ENCODE measurements at regions of chr2 and their contacts with region 1.

Region 1: DNA sequence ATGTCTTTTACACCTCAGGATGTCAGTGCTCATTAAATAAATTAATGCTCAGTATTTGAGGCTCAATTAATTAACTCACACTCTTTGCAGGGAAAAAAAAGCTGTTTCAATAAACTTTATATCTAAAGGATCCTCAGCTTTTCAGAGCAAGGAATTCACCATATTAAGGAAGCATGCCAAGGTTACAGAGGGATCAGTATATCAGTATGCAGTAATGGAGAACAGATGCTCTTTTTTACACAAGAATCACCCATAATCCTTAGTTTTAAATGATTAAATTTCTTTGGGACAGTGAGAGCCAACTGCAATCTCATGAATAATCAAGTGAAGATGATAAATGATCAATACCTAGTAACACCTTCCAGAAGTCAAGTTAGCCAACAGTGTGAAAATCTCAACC is 14.9 kb upstream of the LCT start:
- DNase-seq: no peak
- CTCF ChIP-seq: no peak

Region 2: DNA sequence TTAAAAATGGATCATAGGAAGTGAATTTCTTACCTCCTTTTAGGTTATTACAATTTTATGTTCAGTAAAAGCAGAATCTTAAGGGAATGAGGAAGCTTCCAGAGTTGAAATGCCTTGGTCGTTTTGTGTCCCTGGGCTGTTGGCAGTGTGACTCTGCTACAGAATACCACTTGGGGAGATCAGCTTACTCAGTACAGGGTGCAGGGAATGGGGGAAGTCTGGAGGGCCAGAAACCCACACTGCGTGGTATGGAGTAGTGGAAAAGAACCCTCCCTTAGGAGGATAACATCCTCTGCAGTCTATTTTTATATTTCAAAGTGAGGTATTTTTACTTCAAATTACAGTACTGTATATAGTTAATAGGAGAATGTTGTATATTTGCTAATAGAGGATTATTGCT is 269.5 kb before region 1 on chr2:
- CTCF ChIA-PET with region 1: no interaction called
- POLR2A ChIA-PET with region 1: no interaction called
- DNase-seq: no peak
- CTCF ChIP-seq: no peak

Region 3: GRCh38 chr2:135825550-135826176 is 26.2 kb before region 1 on chr2:
- CTCF ChIA-PET with region 1: interaction called, 14 read pairs
- POLR2A ChIA-PET with region 1: no interaction called
- DNase-seq: no peak
- CTCF ChIP-seq: no peak

Region 4: DNA sequence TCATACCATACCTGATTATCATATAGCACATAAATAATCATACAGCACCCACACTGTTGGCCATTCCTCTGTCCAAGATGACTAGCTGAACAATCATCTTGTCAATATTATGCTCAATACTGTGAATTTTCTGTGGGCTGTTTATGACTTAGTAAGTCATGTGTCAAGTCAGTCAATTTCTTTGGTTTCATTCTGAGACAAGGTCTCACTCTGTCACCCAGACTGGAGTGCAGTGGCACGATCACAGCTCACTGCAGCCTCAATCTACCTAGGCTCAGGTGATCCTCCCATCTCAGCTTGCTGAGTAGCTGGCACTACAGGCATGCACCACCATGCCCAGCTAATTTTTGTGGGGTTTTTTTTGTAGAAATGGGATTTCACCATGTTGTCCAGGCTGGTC is 18.7 kb after region 1 on chr2:
- CTCF ChIA-PET with region 1: interaction called, 11 read pairs
- POLR2A ChIA-PET with region 1: interaction called, 5 read pairs
- DNase-seq: no peak
- CTCF ChIP-seq: no peak